GM12878 (cell line): ENCODE measurements at regions of chr6 and their contacts with region 1.

Region 1: DNA sequence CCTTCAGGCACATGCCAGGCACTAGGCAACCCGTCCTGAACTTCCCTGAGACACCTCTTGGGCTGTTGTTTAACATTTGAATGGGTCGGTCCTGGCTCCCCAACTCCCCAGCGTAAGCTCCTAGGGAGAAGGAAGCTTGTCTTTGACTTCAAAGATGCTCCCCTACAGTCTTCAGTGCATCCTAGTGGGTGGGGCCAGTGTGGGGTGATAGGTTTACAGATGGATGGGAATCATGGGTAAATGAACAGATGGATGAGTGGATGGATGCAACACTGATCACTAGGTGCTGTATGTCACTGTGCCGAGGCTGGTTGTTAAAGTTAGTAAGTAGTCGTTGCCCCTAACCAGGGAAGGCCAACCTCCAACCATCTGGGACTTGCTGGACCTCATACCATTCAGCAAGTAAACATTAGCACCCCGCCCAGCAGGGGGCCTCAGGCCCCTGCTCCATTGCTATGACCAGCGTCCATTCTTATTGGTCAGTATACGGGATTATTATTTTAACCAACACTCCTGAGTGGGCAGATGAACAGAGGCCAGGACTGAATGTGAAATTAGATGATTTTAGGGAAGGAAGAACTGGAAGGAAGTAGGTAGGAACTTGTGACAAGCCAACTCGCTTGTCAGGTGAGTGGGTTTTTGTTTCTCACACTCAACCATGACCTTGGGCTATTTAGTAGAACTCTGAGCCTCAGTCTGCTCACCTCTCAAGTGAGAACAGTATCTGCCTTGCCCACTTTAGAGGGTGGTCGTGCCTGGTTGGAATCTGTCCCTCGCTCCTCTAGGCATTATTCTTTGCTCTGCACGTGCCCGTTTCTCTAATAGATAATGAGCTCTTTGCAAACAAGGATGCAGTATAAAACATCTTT is 82.9 kb upstream of the FOXP4 start:
- DNase-seq: no peak
- ATAC-seq: peak; percentile 99
- H3K4me3 ChIP-seq: no peak overlapping the region
- H3K27ac ChIP-seq: no peak overlapping the region
- H3K4me1 ChIP-seq: no peaks in the 10 kb centered on the region
- H3K27me3 ChIP-seq: peaks cover 0 to 3% of the 10 kb centered on the region in 2 experiments; a peak in 1 of 4 replicates
- CTCF ChIP-seq: peak; percentile 74 to 82 (median 81)
- EP300 ChIP-seq: no peak
- POLR2A ChIP-seq: no peak
- RAD21 ChIP-seq: peak; percentile 96

Region 2: GRCh38 chr6:40874495-40874894 is 588.8 kb before region 1 on chr6:
- CTCF ChIA-PET with region 1: no interaction called
- POLR2A ChIA-PET with region 1: no interaction called
- RAD21 ChIA-PET with region 1: no interaction called
- SMC1A ChIA-PET with region 1: no interaction called
- in situ Hi-C with region 1: no loop called
- intact Hi-C with region 1: no loop called
- DNase-seq: no peak
- ATAC-seq: peak; percentile 29; the same call in 1 of the 3 replicates
- H3K4me3 ChIP-seq: no peak overlapping the region
- H3K27ac ChIP-seq: no peak overlapping the region
- H3K4me1 ChIP-seq: no peaks in the 10 kb centered on the region; the same call in 1 of the 2 replicates
- H3K27me3 ChIP-seq: peaks cover 0 to 1% of the 10 kb centered on the region in 2 experiments; a peak in 1 of 4 replicates
- CTCF ChIP-seq: peak in 2 of 3 experiments; percentile 13 to 25; a peak in 2 of 6 replicates
- EP300 ChIP-seq: no peak
- POLR2A ChIP-seq: no peak
- RAD21 ChIP-seq: no peak

Region 3: GRCh38 chr6:41228616-41229015 is 234.7 kb before region 1 on chr6:
- CTCF ChIA-PET with region 1: no interaction called
- POLR2A ChIA-PET with region 1: no interaction called
- RAD21 ChIA-PET with region 1: no interaction called
- SMC1A ChIA-PET with region 1: no interaction called
- in situ Hi-C with region 1: no loop called
- intact Hi-C with region 1: no loop called
- DNase-seq: no peak
- ATAC-seq: no peak
- H3K4me3 ChIP-seq: no peak overlapping the region
- H3K27ac ChIP-seq: no peak overlapping the region
- H3K4me1 ChIP-seq: no peaks in the 10 kb centered on the region
- H3K27me3 ChIP-seq: peaks cover 0 to 3% of the 10 kb centered on the region in 2 experiments; a peak in 1 of 4 replicates
- CTCF ChIP-seq: peak in 2 of 3 experiments; percentile 8 to 11; a peak in 1 of 6 replicates
- EP300 ChIP-seq: no peak
- POLR2A ChIP-seq: no peak
- RAD21 ChIP-seq: peak; percentile 27; the same call in 1 of the 2 replicates

Region 4: GRCh38 chr6:41298785-41299502 is 164.4 kb before region 1 on chr6:
- CTCF ChIA-PET with region 1: no interaction called
- POLR2A ChIA-PET with region 1: no interaction called
- RAD21 ChIA-PET with region 1: no interaction called
- SMC1A ChIA-PET with region 1: no interaction called
- in situ Hi-C with region 1: no loop called
- intact Hi-C with region 1: no loop called
- DNase-seq: no peak
- ATAC-seq: peak; percentile 42; the same call in 2 of the 3 replicates
- H3K4me3 ChIP-seq: no peak overlapping the region
- H3K27ac ChIP-seq: no peak overlapping the region
- H3K4me1 ChIP-seq: peaks cover 7% of the 10 kb centered on the region
- H3K27me3 ChIP-seq: no peaks in the 10 kb centered on the region
- CTCF ChIP-seq: no peak
- EP300 ChIP-seq: no peak
- POLR2A ChIP-seq: no peak
- RAD21 ChIP-seq: no peak

Region 5: DNA sequence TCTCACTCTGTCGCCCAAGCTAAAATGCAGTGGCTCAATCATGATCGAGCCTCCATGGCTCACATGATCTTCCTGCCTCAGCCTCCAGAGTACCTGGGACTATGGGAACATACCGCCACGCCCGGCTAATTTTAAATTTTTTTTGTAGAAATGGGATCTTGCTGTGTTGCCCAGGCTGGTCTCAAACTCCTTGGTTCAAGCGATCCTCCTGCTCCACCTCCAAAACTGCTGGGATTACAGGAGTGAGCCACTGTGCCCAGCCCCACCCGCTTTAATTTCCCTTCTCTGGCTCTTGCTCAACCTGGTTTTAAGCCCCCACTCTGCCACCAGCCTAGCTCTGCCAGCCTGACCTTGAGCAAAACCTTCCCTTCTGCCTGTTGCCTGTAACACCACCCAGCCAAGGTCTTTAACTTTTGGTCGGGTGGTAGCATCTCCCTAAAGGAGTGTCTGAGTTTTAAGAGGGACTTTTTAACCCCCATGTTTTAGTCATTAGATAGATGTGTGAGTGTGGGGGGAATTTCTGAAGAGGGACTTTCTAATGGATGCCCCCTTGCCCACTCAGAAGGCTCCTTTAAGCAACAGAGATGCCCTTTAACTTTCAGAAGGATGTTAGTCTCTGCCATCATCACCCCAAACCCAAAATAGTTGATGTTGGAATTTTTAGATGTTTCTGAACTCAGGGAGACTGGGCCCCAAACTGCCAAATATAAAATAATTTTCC is 11.1 kb after region 1 on chr6:
- CTCF ChIA-PET with region 1: interaction called, 11 read pairs
- POLR2A ChIA-PET with region 1: no interaction called
- RAD21 ChIA-PET with region 1: interaction called, 5 read pairs
- SMC1A ChIA-PET with region 1: interaction called, 12 read pairs
- in situ Hi-C with region 1: no loop called
- intact Hi-C with region 1: no loop called
- DNase-seq: no peak
- ATAC-seq: peak; percentile 70
- H3K4me3 ChIP-seq: no peak overlapping the region
- H3K27ac ChIP-seq: no peak overlapping the region
- H3K4me1 ChIP-seq: no peaks in the 10 kb centered on the region
- H3K27me3 ChIP-seq: peaks cover 0 to 3% of the 10 kb centered on the region in 2 experiments; a peak in 2 of 4 replicates
- CTCF ChIP-seq: no peak
- EP300 ChIP-seq: no peak
- POLR2A ChIP-seq: no peak
- RAD21 ChIP-seq: no peak

Region 6: DNA sequence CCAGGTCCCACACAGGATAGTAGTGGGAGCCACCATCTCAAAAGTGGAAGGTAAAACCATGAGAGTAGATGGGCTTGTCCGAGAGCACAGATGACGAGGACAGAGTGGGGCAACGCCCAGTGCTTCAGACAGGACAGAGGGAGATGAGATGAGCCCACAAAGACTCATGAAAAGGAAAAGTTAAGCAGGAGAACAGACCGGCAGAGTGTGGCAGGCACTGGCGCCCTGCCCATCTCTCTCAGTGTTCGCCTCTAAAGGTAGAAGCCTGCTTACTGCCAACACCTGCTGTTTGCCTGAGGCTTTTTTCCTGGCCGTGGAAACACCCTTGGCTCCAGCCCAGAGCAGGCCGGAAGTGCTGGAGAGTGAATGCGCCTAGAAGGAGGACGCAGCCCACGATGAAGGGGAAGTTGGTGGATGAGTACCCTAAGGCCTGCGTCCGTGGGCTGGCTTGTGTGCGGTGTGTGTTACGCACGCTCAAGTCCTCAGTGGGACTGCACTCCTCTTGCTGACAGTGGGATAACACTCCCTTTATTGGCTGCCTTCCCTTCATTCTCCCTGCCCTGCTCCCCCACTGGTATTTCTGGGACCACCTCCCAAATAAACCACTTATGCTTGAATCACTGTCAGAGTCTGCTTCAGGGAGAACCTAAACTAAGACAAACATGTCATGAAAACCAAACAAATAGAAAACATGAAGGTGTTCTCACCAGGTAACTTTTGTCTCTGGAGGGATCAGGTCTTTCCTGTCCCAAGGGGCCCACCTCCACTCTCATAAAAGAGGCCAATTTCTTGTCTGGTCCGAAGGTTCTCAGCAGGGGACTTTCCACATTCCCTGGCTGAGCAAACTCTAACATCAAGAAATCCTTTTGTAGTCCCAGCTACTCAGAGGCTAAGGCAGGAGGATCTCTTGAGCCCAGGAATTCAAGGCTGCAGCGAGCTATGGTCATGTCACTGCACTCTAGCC is 73.8 kb after region 1 on chr6:
- CTCF ChIA-PET with region 1: interaction called, 7 read pairs
- POLR2A ChIA-PET with region 1: interaction called, 8 read pairs
- RAD21 ChIA-PET with region 1: interaction called, 9 read pairs
- SMC1A ChIA-PET with region 1: interaction called, 11 read pairs
- in situ Hi-C with region 1: no loop called
- intact Hi-C with region 1: no loop called
- DNase-seq: no peak
- ATAC-seq: no peak
- H3K4me3 ChIP-seq: no peak overlapping the region
- H3K27ac ChIP-seq: no peak overlapping the region
- H3K4me1 ChIP-seq: peaks cover 33% of the 10 kb centered on the region
- H3K27me3 ChIP-seq: no peaks in the 10 kb centered on the region
- CTCF ChIP-seq: no peak
- EP300 ChIP-seq: no peak
- POLR2A ChIP-seq: no peak
- RAD21 ChIP-seq: no peak

Region 7: GRCh38 chr6:41586252-41587007 is 123.1 kb after region 1 on chr6:
- CTCF ChIA-PET with region 1: interaction called, 117 read pairs
- POLR2A ChIA-PET with region 1: interaction called, 7 read pairs
- RAD21 ChIA-PET with region 1: interaction called, 57 read pairs
- SMC1A ChIA-PET with region 1: interaction called, 34 read pairs
- in situ Hi-C with region 1: loop called (anchors 5 kb)
- intact Hi-C with region 1: no loop called
- DNase-seq: no peak
- ATAC-seq: no peak
- H3K4me3 ChIP-seq: no peak overlapping the region
- H3K27ac ChIP-seq: no peak overlapping the region
- H3K4me1 ChIP-seq: no peaks in the 10 kb centered on the region
- H3K27me3 ChIP-seq: no peaks in the 10 kb centered on the region
- CTCF ChIP-seq: no peak
- EP300 ChIP-seq: no peak
- POLR2A ChIP-seq: no peak
- RAD21 ChIP-seq: no peak

Region 8: GRCh38 chr6:41602864-41603608 is 139.7 kb after region 1 on chr6:
- CTCF ChIA-PET with region 1: interaction called, 26 read pairs
- POLR2A ChIA-PET with region 1: interaction called, 3 read pairs
- RAD21 ChIA-PET with region 1: interaction called, 6 read pairs
- SMC1A ChIA-PET with region 1: interaction called, 5 read pairs
- in situ Hi-C with region 1: no loop called
- intact Hi-C with region 1: no loop called
- DNase-seq: peak; percentile 24
- ATAC-seq: peak; percentile 94
- H3K4me3 ChIP-seq: no peak overlapping the region
- H3K27ac ChIP-seq: no peak overlapping the region
- H3K4me1 ChIP-seq: no peaks in the 10 kb centered on the region
- H3K27me3 ChIP-seq: no peaks in the 10 kb centered on the region; a peak in 1 of 4 replicates
- CTCF ChIP-seq: peak; percentile 93 to 96 (median 96)
- EP300 ChIP-seq: no peak
- POLR2A ChIP-seq: no peak
- RAD21 ChIP-seq: peak; percentile 90